AG04450 (cell line): ENCODE measurements at regions of chr20 and their contacts with region 1.

Region 1: GRCh38 chr20:5041433-5041832 is 40.1 kb upstream of the SLC23A2 start:
- DNase-seq: no peak
- H3K4me3 ChIP-seq: no peak overlapping the region
- H3K27ac ChIP-seq: no peak overlapping the region
- H3K27me3 ChIP-seq: peaks cover 3% of the 10 kb centered on the region
- CTCF ChIP-seq: no peak

Region 2: DNA sequence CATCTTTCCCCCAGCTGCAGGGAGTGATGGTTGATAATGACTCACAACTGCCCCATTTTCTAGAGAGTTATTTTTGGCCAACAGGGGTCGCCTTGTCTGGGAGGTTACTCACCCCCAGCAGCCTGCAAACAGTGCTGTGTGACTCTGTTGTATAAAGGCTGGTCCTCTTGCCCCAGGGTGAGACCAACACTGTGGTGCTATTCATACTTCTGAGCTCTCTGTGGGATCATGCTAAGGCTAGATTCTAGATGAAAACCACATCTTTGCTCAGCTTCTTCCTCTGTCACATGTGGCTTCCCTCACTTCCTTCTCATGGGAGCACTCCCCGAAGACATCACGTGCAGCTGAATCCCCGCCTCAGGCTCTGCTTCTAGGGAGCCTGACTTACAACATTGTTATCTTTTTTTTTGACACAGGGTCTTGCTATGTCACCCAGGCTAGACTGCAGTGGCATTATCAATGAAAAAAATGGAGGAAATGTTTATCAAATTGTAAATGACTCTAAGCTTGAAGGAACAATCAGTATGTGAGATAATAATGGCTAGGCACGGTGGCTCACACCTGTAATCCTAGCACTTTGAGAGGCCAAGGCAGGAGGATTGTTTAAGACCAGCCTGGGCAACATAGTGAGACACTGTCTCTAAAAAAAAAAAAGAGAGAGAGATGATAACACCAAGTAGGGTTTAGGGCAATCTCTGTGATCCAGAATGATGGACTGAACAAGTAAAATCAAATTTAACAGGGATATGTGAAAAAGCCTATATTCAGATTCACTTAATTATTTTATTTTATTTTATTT is 15.6 kb after region 1 on chr20:
- CTCF ChIA-PET with region 1: interaction called, 12 read pairs
- POLR2A ChIA-PET with region 1: no interaction called
- DNase-seq: no peak
- H3K4me3 ChIP-seq: no peak overlapping the region
- H3K27ac ChIP-seq: no peak overlapping the region
- H3K27me3 ChIP-seq: peaks cover 2% of the 10 kb centered on the region
- CTCF ChIP-seq: peak; percentile 45

Region 3: DNA sequence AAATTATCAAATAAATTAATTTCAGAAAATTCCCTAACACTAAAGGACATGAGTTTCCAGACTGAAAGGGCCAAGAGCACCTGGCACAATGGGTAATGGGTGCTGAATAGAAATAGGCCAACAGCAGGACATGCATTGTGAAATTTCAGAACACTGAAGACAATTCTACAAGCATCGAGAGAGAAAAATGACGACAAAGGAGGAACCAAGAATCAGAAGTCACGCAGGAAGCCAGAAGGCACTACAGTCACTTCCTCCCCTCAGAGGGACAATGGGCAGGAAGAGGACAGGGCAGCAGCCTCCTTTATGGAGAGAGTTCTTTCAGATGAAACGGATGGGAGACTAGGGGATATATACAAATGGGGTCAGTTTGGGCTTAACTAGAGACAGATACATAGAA is 48.8 kb after region 1 on chr20:
- CTCF ChIA-PET with region 1: no interaction called
- POLR2A ChIA-PET with region 1: interaction called, 15 read pairs
- DNase-seq: no peak
- H3K4me3 ChIP-seq: no peak overlapping the region
- H3K27ac ChIP-seq: no peak overlapping the region
- H3K27me3 ChIP-seq: no peaks in the 10 kb centered on the region
- CTCF ChIP-seq: no peak